ENCODE measurements at regions of chr1 and their contacts with region 1.

Region 1: DNA sequence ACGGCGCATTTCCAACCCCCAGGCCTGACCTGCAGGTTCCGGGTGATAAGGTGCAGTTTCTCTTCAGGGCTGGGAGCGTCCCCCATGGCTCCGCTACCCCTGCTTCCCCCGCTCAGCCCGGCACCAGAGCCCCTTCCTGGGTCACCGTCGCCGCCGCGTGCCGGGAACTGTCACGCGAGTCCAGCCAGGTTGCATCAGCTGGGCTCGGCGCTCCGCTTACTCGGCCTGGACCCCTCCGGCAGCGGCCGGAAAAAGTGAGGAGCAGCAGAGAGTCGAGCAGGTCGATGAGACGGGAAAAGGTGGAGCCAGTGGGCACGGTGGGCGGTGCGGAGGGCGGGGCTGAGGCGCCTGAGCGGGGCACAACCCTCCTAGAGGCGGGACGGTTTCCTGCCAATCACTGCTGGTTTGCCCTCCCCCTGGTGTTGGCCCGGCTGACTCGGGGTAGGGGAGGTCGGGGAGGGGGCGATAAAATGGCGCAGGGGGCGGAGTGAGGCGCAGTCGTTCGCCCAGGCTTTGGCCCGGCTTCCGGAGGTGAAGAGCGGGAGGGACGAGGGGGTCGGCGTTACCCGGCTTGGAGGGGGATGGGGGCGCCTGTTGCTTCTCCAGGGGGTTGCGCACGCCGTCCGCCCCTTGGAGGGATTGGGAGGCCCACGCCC is at the starts of genes S100PBP and YARS1:
- DNase-seq: peak; percentile 98
- H3K4me3 ChIP-seq: peak within 1 kb of the TSS; percentile 54 to 92 (median 83)
- H3K27ac ChIP-seq: peak within 1 kb of the TSS; percentile 60
- H3K4me1 ChIP-seq: peaks cover 25% of the 10 kb centered on the region
- H3K27me3 ChIP-seq: no peaks in the 10 kb centered on the region
- CTCF ChIP-seq: no peak
- POLR2A ChIP-seq: no peak
- total RNA-seq, gene S100PBP: 36.9 and 38.6 TPM in 2 replicates
- total RNA-seq, gene YARS1: 130 and 144 TPM in 2 replicates

Region 2: DNA sequence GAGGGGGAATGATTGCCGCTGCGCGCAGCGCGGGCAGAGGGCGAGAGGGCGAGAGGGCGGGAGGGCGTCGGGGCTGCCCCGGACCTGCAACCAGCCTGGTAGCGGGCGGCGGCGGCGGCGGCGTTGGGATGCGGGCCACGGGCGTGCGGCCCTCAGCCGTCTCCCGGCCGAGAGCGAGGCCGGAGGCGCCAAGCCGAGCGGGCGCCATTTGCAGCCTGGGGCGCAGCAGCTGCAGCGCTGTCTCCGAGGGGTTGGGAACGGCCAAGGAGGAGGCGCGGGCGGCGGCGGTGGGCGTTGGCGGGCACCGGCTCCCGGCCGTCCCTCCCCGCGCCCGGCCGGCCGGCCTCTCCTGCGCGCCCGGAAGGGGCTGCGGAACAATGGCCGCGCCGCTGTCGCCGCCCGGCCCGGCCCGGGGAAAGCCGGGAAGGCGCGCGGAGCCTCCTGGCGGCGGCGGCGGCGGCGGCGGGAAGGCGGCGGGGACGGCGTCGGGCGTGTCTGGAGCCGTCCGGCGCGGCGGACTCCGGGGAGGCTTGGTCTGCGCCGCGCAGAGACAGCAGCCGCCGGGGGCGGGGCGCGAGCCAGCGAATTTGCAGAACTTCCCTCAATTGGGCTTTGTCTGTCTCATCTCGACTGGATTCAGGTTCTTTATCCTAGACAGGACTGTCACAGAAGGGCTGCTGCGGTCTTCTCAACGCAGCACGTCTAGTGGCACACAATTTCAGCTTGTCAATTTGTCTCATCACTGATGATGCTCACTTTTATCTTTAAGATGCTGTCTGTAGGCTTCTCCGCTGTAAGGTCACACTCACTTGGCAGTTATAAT is 316.7 kb before region 1 on chr1:
- CTCF ChIA-PET with region 1: no interaction called
- POLR2A ChIA-PET with region 1: no interaction called
- dilution Hi-C with region 1: no loop called
- intact Hi-C with region 1: loop called (anchors 2 kb)
- DNase-seq: peak; percentile 49
- H3K4me3 ChIP-seq: peak overlapping the region; percentile 48 to 83 (median 74)
- H3K27ac ChIP-seq: peak overlapping the region; percentile 55
- H3K4me1 ChIP-seq: peaks cover 30% of the 10 kb centered on the region
- H3K27me3 ChIP-seq: no peaks in the 10 kb centered on the region
- CTCF ChIP-seq: no peak
- POLR2A ChIP-seq: peak; percentile 73

Region 3: GRCh38 chr1:32627596-32628162 is 189.6 kb before region 1 on chr1:
- CTCF ChIA-PET with region 1: no interaction called
- POLR2A ChIA-PET with region 1: no interaction called
- dilution Hi-C with region 1: no loop called
- intact Hi-C with region 1: no loop called
- DNase-seq: no peak
- H3K4me3 ChIP-seq: no peak overlapping the region
- H3K27ac ChIP-seq: no peak overlapping the region
- H3K4me1 ChIP-seq: no peaks in the 10 kb centered on the region
- H3K27me3 ChIP-seq: no peaks in the 10 kb centered on the region
- CTCF ChIP-seq: no peak
- POLR2A ChIP-seq: no peak

Region 4: DNA sequence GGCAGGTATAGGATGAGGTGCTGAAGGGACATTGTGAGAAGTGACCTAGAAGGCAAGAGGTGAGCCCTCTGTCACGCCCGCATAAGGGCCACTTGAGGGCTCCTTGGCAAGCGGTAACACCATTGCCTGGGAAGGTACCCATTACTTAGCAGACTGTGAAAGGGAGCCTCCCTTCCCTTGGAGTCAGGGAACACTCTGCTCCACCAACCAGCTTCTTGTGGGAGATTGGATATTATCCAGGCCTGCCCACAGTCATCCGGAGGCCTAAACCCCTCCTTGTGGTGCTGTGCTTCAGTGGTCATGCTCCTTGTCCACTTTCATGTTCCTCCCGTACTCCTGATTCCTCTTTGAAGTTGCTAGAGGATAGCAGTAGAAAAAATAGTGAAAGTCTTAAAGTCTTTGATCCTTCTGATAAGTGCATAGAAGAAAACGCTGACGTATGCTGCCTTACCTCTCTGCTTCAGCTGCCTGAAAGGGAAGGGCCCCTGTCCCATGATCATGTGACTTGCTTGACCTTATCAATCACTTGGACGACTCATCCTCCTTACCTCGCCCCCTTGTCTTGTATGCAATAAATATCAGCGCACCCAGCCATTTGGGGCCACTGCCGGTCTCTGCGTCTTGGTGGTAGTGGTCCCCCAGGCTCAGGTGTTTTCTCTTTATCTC is 150.3 kb before region 1 on chr1:
- CTCF ChIA-PET with region 1: no interaction called
- POLR2A ChIA-PET with region 1: no interaction called
- dilution Hi-C with region 1: no loop called
- intact Hi-C with region 1: no loop called
- DNase-seq: no peak
- H3K4me3 ChIP-seq: no peak overlapping the region
- H3K27ac ChIP-seq: no peak overlapping the region
- H3K4me1 ChIP-seq: no peaks in the 10 kb centered on the region
- H3K27me3 ChIP-seq: no peaks in the 10 kb centered on the region
- CTCF ChIP-seq: no peak
- POLR2A ChIP-seq: no peak

Region 5: DNA sequence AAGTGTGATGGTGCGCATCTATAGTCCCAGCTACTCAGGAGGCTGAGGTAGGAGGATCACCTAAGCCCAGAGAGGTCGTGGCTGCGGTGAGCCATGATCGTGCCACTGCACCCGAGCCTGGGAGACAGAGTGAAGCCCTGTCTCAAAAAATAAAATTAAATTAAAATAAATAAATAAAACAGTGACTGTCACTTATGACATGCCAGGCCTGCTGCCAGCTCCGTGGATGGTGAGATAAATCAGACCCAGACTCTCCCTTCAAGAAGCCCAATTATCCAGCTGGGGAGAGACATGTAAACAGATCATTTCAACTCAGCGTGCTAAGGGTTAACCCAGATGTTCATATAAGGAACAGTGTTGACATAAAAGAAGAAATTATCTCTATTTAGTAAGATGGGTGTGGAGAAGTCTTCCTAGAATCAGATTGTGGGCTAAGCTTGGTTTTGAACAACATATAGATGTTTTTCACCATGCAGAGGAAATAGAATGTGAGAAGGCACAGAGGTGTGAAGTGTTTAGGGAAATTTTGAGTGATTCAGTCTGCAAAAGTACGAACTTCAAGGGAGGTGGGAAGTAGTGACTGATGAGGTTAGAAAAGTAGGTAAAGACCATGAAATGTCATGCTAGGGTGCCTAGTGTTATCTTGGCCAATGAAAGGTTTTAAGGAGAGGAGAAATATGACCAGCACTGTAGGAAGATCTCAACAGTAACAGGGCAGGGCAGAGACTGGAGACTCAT is 18.4 kb before region 1 on chr1:
- CTCF ChIA-PET with region 1: no interaction called
- POLR2A ChIA-PET with region 1: no interaction called
- dilution Hi-C with region 1: no loop called
- intact Hi-C with region 1: loop called (anchors 2 kb)
- DNase-seq: no peak
- H3K4me3 ChIP-seq: no peak overlapping the region
- H3K27ac ChIP-seq: no peak overlapping the region
- H3K4me1 ChIP-seq: peaks cover 8% of the 10 kb centered on the region
- H3K27me3 ChIP-seq: no peaks in the 10 kb centered on the region
- CTCF ChIP-seq: no peak
- POLR2A ChIP-seq: no peak

Region 6: DNA sequence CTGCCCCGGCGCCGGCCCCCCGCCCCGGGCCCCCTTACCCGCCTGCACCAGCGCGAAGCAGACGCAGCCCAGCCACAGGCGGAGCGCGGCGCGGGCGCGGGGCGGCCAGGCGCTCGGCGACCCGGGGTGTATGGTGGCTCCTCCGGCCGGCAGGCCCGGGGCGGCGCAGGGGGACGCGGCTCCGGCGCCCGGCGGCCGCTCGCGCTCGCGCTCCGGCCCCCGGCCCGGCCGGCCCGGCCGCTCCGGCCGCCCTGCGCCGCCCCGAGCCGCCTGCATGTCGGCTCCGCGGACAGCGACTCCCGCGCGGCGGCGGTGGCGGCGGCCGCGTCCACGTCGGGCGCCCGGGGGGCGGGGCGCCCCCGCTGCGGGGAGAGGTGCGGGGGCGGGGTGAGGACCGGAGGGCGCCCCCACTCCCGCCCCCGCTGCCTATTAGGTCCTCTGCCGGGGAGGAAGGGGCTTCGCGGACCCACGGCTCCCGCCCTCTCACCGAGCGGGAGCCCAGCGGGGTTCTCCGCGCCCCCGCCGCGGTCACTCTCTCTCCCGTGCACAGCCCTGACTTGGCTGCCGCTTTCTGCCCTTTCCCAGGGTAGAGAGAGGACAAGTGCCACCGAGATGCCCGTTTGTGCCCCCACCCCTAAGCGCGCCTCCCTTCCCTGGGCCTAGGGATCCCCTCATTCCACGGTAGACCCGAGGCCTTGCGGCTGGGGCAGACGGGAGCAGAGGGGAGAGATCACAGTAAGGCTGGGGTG is 53.5 kb after region 1 on chr1 and contains the start of gene FNDC5:
- CTCF ChIA-PET with region 1: no interaction called
- POLR2A ChIA-PET with region 1: no interaction called
- dilution Hi-C with region 1: no loop called
- intact Hi-C with region 1: loop called (anchors 1 kb)
- DNase-seq: no peak
- H3K4me3 ChIP-seq: peak within 1 kb of the TSS in 1 of 3 experiments; percentile 36
- H3K27ac ChIP-seq: no peak within 1 kb of the TSS
- H3K4me1 ChIP-seq: no peaks in the 10 kb centered on the region
- H3K27me3 ChIP-seq: peaks cover 14 to 17% of the 10 kb centered on the region in 2 experiments
- CTCF ChIP-seq: no peak
- POLR2A ChIP-seq: no peak
- total RNA-seq, gene FNDC5: 0.64 TPM in 1 of 2 replicates, not detected in the other

Region 7: DNA sequence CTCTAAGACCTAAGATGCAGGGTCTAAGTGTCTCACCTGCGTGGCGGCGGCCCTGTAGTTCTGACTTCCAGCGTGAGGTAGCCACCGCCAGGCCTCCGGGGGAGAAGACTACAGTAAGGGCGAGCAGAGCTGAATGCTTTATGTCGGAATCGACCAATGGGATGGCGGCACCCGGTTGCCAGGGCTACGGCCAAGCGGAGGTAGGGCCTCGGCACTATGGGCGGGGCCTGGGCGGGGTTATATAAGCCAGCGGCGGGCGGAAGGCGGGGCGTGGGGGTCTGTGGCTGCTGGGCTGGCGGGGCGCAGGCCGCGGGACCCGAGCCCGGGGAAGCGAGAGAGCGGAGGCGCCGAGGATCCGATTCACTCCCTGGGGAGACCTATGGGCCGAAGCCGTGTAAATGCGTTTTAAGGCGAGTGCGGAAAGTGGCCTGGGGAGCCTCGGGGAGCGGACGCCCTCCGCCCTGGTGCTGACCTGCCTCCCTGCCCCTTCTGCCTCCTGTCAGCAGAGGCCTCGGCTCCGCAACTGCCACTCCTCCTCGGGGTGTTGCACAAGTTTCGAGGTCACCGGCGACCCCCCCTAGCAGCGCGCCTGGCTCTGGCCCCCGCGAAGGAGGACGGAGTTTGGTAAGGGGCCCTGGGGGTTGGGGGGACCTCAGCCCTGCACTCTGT is 263.7 kb after region 1 on chr1 and contains the start of gene AZIN2:
- CTCF ChIA-PET with region 1: no interaction called
- POLR2A ChIA-PET with region 1: no interaction called
- dilution Hi-C with region 1: no loop called
- intact Hi-C with region 1: loop called (anchors 5 kb)
- DNase-seq: peak; percentile 92
- H3K4me3 ChIP-seq: peak within 1 kb of the TSS; percentile 28 to 64 (median 55)
- H3K27ac ChIP-seq: no peak within 1 kb of the TSS
- H3K4me1 ChIP-seq: peaks cover 10% of the 10 kb centered on the region
- H3K27me3 ChIP-seq: peaks cover 11 to 22% of the 10 kb centered on the region in 2 experiments
- CTCF ChIP-seq: no peak
- POLR2A ChIP-seq: no peak
- total RNA-seq, gene AZIN2: 0.76 and 0.91 TPM in 2 replicates